HEK293 (cell line): ENCODE measurements at regions of chr17 and their contacts with region 1.

Region 1: GRCh38 chr17:64025732-64026294 is 5.4 kb upstream of the ICAM2 start:
- H3K4me3 ChIP-seq: peak overlapping the region; percentile 32
- H3K27ac ChIP-seq: no peak overlapping the region
- H3K4me1 ChIP-seq: no peaks in the 10 kb centered on the region
- CTCF ChIP-seq: peak; percentile 88

Region 2: GRCh38 chr17:63741221-63742049 is 284.4 kb before region 1 on chr17 and contains the start of gene STRADA:
- CTCF ChIA-PET with region 1: no interaction called
- POLR2A ChIA-PET with region 1: no interaction called
- H3K4me3 ChIP-seq: peak within 1 kb of the TSS; percentile 87
- H3K27ac ChIP-seq: peak within 1 kb of the TSS; percentile 95
- H3K4me1 ChIP-seq: peaks cover 6% of the 10 kb centered on the region; the same call in 1 of the 2 replicates
- CTCF ChIP-seq: no peak

Region 3: GRCh38 chr17:63881876-63882601 is 143.8 kb before region 1 on chr17 and contains the start of gene GH2:
- CTCF ChIA-PET with region 1: interaction called, 10 read pairs
- POLR2A ChIA-PET with region 1: no interaction called
- H3K4me3 ChIP-seq: no peak within 1 kb of the TSS
- H3K27ac ChIP-seq: no peak within 1 kb of the TSS
- H3K4me1 ChIP-seq: no peaks in the 10 kb centered on the region
- CTCF ChIP-seq: no peak

Region 4: DNA sequence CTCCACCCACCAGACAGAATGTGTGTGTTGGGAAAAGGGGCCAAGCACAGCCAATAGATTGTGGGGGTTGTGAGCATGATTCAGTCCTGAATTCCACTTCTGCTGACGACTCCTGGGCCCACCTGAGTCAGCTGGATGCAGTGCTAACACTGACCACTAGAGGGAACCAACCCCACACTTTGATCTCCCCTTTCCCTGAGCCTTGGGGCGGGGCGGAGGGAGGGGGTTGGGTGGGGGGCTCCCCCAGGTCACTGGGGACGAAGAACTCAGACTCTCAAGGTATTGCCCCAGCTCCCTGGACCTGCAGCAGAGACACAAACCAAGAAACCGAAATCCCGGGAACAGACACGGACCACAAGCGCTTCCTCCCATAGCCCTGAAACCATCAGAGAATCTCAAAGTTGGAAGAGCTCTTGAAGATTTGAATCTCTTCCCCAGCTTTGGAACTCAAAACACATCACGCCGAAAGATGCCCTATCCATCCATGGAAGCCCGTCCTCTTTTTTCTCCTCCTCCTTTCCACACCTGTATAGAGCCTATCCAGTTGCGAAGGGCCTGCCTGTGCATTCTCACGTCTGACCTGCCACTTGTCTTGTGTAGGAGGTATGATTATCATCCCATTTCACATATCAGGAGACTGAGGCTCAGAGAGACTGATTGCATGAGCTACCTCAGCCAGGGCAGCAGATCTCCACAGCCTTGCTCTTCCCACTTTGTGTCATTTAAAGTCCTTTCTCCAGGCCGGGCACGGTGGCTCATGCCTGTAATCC is 114.0 kb before region 1 on chr17:
- CTCF ChIA-PET with region 1: interaction called, 20 read pairs
- POLR2A ChIA-PET with region 1: no interaction called
- H3K4me3 ChIP-seq: no peak overlapping the region
- H3K27ac ChIP-seq: no peak overlapping the region
- H3K4me1 ChIP-seq: no peaks in the 10 kb centered on the region
- CTCF ChIP-seq: no peak

Region 5: DNA sequence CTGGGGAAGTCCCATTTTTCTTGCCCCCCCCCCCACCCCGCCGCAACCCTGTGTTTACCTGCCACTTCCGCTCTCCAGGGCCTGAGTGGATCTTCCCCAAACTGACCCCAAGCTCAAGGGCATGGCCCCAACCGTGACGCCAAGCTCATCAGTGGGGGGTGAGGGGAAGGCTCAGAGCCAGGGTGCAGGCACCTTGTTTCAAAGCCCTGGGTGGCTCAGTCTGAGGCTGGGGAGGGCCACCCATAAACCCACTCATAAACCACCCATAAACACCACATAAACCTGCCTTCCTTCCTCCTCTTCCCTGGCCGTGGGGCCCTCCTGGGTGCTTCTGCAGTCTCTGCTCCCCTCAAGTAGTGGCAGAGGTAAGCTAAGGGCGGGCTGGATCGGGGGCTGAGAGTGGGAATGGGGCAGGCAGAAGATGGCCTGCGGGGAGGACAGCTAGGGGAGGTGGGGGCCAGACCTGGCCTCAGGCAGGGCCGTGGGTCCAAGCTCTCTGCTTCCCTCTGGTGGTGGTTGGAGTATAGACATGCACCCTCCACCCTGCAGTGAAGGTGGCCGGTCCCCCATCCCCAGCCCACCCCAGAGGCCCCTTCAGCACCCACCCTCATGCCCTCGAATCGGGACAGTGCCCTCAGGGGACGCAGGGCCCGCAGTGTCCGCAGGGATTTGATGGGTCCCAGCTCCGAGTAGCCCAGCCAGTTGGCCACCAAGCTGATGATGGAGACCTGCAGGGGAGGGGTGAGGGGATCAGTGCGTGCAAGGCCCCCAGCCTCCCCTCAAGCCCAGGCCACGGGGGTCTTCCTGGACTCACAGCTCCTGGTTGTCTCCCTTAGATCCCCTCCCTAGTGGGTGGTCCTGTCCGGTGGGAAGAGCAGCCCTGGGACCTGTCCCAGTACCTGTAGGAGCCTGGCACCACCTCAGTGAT is 79.1 kb before region 1 on chr17:
- CTCF ChIA-PET with region 1: interaction called, 11 read pairs
- POLR2A ChIA-PET with region 1: no interaction called
- H3K4me3 ChIP-seq: no peak overlapping the region
- H3K27ac ChIP-seq: no peak overlapping the region
- H3K4me1 ChIP-seq: no peaks in the 10 kb centered on the region
- CTCF ChIP-seq: peak; percentile 53; the same call in 1 of the 2 replicates

Region 6: GRCh38 chr17:64041912-64042311 is 16.1 kb after region 1 on chr17:
- CTCF ChIA-PET with region 1: interaction called, 17 read pairs
- POLR2A ChIA-PET with region 1: no interaction called
- H3K4me3 ChIP-seq: no peak overlapping the region
- H3K27ac ChIP-seq: no peak overlapping the region
- H3K4me1 ChIP-seq: no peaks in the 10 kb centered on the region
- CTCF ChIP-seq: no peak

Region 7: DNA sequence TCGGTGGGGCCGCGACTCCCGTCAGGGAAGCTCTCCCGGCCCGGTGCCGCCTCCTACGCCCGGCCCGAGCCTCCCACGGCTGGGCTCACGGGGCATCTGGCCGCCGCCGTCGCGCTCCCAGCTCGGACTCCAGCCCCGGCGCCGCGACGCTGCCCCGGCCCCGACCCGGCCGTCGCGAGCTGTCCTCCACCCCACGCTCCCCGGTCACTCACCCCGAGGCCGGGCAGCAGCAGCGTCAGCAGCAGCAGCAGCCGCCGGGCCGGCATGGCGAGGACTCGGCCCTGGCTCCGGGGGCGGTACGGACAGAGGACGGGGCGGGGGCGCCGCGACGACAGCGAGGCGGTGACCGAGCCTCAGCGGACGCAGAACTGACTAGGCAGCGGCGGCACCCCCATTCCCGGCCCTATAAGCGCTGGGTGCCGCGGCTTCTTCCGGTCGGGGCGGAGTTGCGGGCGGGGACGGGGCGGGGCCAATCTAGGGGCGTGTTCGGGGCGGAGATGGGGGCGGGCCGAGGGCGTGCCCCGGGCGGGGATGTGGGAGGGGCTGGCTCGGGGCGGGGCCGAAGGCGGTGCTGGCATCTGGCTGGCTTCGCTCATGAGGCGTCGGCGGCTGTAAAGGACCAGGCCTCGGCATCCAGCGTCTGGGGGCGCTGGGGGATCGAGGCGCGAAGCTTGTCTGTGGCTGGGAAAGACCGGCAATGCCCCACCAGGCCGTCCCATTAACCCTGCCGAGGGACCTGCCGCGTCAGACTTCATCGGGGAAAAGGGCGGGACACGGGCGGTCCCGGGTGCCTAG is 104.1 kb after region 1 on chr17 and contains the start of gene ERN1:
- CTCF ChIA-PET with region 1: interaction called, 295 read pairs
- POLR2A ChIA-PET with region 1: interaction called, 5 read pairs
- H3K4me3 ChIP-seq: peak within 1 kb of the TSS; percentile 83
- H3K27ac ChIP-seq: peak within 1 kb of the TSS; percentile 70
- H3K4me1 ChIP-seq: peaks cover 8% of the 10 kb centered on the region
- CTCF ChIP-seq: no peak

Region 8: GRCh38 chr17:64281962-64282727 is 256.3 kb after region 1 on chr17:
- CTCF ChIA-PET with region 1: interaction called, 65 read pairs
- POLR2A ChIA-PET with region 1: no interaction called
- H3K4me3 ChIP-seq: no peak overlapping the region
- H3K27ac ChIP-seq: no peak overlapping the region
- H3K4me1 ChIP-seq: no peaks in the 10 kb centered on the region
- CTCF ChIP-seq: peak; percentile 48; the same call in 1 of the 2 replicates